Right ventricle myocardium superior (tissue), 1 donor: ENCODE measurements at regions of chr6 and their contacts with region 1.

Region 1: GRCh38 chr6:3157131-3157927 is at the start of gene TUBB2A:
- DNase-seq: peak; percentile 92
- ATAC-seq: peak; percentile 92
- total RNA-seq, gene TUBB2A: 18.2 TPM

Region 2: DNA sequence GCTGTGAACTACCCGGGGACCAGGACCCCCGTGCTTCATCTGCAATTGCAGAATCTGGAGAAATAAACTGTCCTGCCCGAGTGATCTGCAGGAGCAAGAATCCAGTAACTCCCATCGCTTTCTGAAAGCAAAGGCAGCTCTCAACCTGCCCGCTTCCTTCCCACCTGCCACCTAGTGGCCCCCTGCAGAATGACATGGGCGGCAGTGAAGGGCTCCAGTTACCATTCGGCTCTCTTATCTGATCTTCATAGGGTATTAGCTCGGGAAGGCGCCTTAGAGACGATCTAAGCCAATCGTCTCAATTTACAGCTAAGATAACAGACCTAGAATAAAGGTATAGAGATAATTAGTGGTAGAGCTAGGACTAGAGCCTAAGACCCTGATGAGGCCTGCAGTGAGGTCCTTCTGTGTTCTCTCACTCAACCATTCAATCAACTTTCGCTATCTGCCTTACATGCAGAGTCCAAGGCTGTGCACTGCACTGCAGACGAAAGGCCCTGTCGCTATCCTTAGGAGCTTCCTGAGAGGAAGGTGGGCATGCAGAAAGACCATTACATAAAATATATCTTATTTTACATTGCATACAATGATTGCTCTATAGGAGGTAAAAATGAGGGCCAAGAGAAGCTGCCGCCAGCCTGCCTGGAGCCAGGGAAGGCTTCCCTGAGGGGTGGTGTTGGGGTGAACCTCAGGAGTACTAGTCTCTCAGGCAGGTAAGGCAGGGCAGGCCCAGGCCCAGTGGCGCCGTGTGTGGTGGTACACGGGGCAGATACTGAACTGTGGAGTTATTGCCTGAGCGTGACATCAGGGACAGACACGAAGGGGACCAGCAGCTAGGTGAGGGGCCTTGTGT is 94.4 kb after region 1 on chr6:
- intact Hi-C with region 1: loop called (anchors 5 kb)
- DNase-seq: peak; percentile 86
- ATAC-seq: peak; percentile 89